Prostate gland (tissue), 2 donors: ENCODE measurements at regions of chr2 and their contacts with region 1.

Region 1: DNA sequence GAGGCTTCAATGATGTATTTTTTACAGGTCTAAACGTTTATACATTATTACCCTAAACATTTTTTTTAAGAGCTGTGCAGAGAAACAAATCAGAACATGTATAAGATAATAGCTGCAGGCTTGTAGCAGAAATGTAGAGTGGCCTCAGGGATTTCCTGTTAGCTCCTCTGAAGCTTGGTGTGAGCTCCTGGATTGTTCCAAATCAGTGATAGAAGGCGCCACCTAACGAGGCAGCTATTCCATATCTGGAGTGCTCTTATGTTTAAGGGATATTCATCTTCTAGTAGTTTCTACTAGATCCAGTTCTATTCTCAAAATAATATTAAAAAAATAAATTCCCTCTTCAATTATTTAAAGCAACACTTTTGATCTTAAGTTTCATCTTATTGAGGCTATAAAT is 93.1 kb downstream of the LRP1B start:
- DNase-seq: no peak
- H3K4me3 ChIP-seq: no peak overlapping the region
- H3K27ac ChIP-seq: no peak overlapping the region
- H3K4me1 ChIP-seq: no peaks in the 10 kb centered on the region
- H3K27me3 ChIP-seq: no peaks in the 10 kb centered on the region
- CTCF ChIP-seq: no peak
- POLR2A ChIP-seq: no peak

Region 2: DNA sequence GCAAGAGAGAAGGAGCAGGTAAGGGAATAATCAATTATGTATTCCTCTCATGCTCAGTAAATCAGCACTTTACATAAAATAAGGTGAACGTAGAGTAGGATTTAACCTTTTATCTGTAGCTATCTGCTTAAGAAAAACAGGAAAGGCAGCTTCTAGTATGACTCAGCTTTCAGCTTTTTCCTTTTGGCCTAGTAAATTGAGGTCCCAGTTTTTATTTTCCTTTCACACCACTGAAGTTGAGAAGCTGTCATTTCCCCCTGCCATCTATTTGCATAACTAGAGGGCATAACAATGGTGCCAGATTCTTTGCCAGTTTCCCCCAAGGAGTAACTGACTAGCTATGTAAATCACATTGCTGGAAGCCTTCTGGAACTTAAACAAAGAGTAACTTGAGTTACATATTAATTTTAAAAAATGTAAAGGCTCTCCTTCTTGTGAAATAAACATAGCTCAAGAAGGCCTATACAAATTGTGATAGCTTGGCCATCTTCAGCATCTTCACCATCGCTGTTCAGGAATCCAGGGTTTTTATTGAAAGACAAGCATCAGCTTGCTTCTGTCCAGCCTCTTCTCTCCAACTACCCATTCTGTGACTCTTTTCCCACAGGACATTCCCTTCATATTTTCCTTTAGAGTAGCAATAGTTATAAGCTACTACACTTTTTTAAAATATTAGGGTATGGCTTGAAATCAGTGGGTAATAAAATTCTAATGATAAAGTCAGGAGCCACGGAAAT is 936.7 kb after region 1 on chr2:
- intact Hi-C with region 1: loop called (anchors 10 kb)
- DNase-seq: peak; percentile 20
- H3K4me3 ChIP-seq: no peak overlapping the region
- H3K27ac ChIP-seq: peak overlapping the region in 1 of 2 donors; percentile 6
- H3K4me1 ChIP-seq: no peaks in the 10 kb centered on the region
- H3K27me3 ChIP-seq: no peaks in the 10 kb centered on the region
- CTCF ChIP-seq: no peak
- POLR2A ChIP-seq: no peak